ENCODE measurements at regions of chr4 and their contacts with region 1.

Region 1: GRCh38 chr4:64781737-64782326 is 372.6 kb upstream of the TECRL start:
- DNase-seq: peak; percentile 16
- ATAC-seq: no peak; the same call in 2 of the 3 replicates
- H3K4me3 ChIP-seq: no peak overlapping the region
- H3K27ac ChIP-seq: no peak overlapping the region
- H3K4me1 ChIP-seq: no peaks in the 10 kb centered on the region
- H3K27me3 ChIP-seq: no peaks in the 10 kb centered on the region
- CTCF ChIP-seq: peak; percentile 54
- EP300 ChIP-seq: no peak
- POLR2A ChIP-seq: no peak
- RAD21 ChIP-seq: no peak

Region 2: DNA sequence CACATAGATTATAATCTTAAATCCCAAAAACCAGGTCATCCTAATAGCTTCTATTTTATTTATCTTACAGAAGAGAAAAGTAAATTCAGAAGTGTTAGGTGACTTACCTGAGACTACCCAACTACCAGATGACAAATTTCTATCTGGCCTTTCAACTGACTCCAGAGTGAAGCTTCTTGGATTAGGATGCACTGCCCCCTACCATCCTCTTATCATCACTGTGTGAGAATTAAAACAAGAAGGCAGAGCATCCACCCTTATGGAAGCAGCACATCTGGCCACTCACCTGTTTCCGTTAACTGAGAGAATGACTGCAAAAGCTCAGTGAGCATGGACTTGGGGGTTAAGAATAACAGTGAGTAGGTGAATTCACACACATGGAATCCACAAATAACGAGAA is 130.0 kb after region 1 on chr4:
- CTCF ChIA-PET with region 1: no interaction called
- POLR2A ChIA-PET with region 1: no interaction called
- in situ Hi-C with region 1: no loop called
- intact Hi-C with region 1: loop called (anchors 10 kb)
- DNase-seq: no peak
- ATAC-seq: no peak
- H3K4me3 ChIP-seq: no peak overlapping the region
- H3K27ac ChIP-seq: no peak overlapping the region
- H3K4me1 ChIP-seq: no peaks in the 10 kb centered on the region
- H3K27me3 ChIP-seq: no peaks in the 10 kb centered on the region
- CTCF ChIP-seq: no peak
- EP300 ChIP-seq: no peak
- POLR2A ChIP-seq: no peak
- RAD21 ChIP-seq: no peak

Measured in HepG2 (cell line).